ENCODE measurements at regions of chr3 and their contacts with region 1.

Region 1: GRCh38 chr3:190321789-190322603 is at the start of gene CLDN1:
- DNase-seq: peak; percentile 47 to 86 (median 76)
- ATAC-seq: peak; percentile 92
- H3K4me3 ChIP-seq: peak within 1 kb of the TSS; percentile 52
- H3K4me3 Mint-ChIP-seq: peak within 1 kb of the TSS; percentile 66 to 85 (median 80)
- H3K27ac ChIP-seq: no peak within 1 kb of the TSS
- H3K27ac Mint-ChIP-seq: peak within 1 kb of the TSS in 6 of 9 donors; percentile 6 to 38 (median 22)
- H3K4me1 ChIP-seq: peaks cover 0 to 4% of the 10 kb centered on the region in 2 donors
- H3K4me1 Mint-ChIP-seq: peaks cover 14 to 30% (median 21%) of the 10 kb centered on the region in 7 donors
- H3K27me3 ChIP-seq: no peaks in the 10 kb centered on the region
- H3K27me3 Mint-ChIP-seq: peaks cover 30 to 47% (median 38%) of the 10 kb centered on the region in 5 donors
- total RNA-seq, gene CLDN1: 0.08 to 0.32 TPM in 2 of 5 experiments, not detected in the others

Region 2: DNA sequence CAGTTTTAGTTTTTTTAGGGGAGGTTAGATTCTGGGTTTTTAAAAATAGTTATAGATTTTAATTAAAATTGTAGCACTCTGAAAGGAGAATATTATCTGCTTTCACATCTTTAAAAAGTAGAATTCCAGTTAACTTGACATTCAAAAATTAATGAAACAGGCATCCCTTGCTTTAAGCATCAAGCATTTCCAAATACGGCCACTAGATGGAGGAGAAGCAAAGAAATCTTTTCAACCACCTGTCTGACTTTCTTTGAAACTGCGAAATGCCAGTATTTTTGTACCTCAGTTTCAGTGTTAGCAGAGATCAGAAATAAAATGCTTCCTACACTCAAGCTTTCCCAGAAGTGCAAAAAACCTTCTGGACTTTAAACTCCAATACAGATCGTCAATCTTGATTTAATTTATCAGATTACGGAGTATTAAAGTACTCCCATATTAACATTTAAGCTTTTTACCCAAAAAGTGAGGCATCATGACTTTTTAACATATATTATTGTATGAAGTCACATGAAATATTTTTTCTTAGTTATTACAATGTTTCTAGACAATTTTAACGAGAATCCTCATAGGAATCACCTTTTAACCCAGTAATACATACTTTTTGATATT is 354.6 kb before region 1 on chr3:
- CTCF ChIA-PET with region 1: interaction called, 8 read pairs
- POLR2A ChIA-PET with region 1: no interaction called
- intact Hi-C with region 1: loop called (anchors 1 kb)
- DNase-seq: peak in 6 of 9 donors; percentile 13 to 47 (median 33)
- ATAC-seq: no peak
- H3K4me3 ChIP-seq: no peak overlapping the region
- H3K4me3 Mint-ChIP-seq: no peak overlapping the region
- H3K27ac ChIP-seq: no peak overlapping the region
- H3K27ac Mint-ChIP-seq: no peak overlapping the region
- H3K4me1 ChIP-seq: no peaks in the 10 kb centered on the region
- H3K4me1 Mint-ChIP-seq: peaks cover 0 to 4% (median 0%) of the 10 kb centered on the region in 7 donors
- H3K27me3 ChIP-seq: no peaks in the 10 kb centered on the region
- H3K27me3 Mint-ChIP-seq: peaks cover 0 to 9% (median 5%) of the 10 kb centered on the region in 5 donors

Region 3: GRCh38 chr3:190119461-190120268 is 202.3 kb before region 1 on chr3:
- CTCF ChIA-PET with region 1: no interaction called
- POLR2A ChIA-PET with region 1: no interaction called
- intact Hi-C with region 1: loop called in 1 of 2 experiments (anchors 5 kb)
- DNase-seq: no peak
- ATAC-seq: peak; percentile 24
- H3K4me3 ChIP-seq: no peak overlapping the region
- H3K4me3 Mint-ChIP-seq: peak overlapping the region; percentile 54 to 86 (median 70)
- H3K27ac ChIP-seq: no peak overlapping the region
- H3K27ac Mint-ChIP-seq: no peak overlapping the region
- H3K4me1 ChIP-seq: no peaks in the 10 kb centered on the region
- H3K4me1 Mint-ChIP-seq: peaks cover 3 to 12% (median 9%) of the 10 kb centered on the region in 7 donors
- H3K27me3 ChIP-seq: no peaks in the 10 kb centered on the region
- H3K27me3 Mint-ChIP-seq: peaks cover 48 to 78% (median 62%) of the 10 kb centered on the region in 5 donors

Region 4: DNA sequence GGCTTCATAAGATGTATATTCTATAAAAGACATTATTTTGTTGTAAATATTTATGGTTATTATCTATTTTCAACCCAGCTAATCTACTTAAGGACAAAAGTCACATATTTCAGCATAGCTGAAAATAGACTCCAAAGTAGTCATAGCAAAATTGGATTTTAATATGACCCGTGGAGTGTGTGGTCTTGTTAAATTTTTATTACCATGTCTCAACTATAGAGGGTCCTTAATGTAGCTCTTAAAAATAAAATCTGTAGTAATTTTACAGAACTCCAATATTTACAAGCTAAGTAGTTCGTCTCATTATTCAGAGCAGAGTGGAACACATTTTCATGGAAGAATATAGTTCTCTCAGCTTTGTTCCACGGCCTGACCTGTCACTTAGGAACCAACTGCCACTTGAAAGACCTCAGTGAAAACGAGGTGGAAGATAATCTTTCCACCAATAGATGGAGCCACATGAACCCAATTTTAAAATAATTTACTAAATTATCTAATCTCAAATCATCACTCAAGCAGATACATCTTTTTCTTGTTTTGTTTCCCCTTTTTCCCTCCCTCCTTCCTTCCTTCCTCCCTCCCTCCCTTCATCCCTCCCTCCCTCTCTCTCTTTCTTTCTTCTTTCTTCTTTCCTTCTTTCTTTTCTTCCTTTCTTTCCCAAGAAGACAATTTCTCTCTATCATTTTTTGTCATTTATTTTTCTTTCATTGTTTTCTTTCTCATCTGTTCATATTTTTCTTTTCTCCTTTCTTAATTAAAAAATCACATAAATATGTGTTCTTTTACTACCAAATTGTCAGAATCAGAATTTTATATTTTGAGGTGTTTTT is 96.9 kb before region 1 on chr3:
- CTCF ChIA-PET with region 1: interaction called, 21 read pairs
- POLR2A ChIA-PET with region 1: no interaction called
- intact Hi-C with region 1: loop called (anchors 1 to 2 kb)
- DNase-seq: peak in 6 of 9 donors; percentile 5 to 40 (median 26)
- ATAC-seq: no peak
- H3K4me3 ChIP-seq: no peak overlapping the region
- H3K4me3 Mint-ChIP-seq: no peak overlapping the region
- H3K27ac ChIP-seq: no peak overlapping the region
- H3K27ac Mint-ChIP-seq: no peak overlapping the region
- H3K4me1 ChIP-seq: no peaks in the 10 kb centered on the region
- H3K4me1 Mint-ChIP-seq: no peaks in the 10 kb centered on the region
- H3K27me3 ChIP-seq: no peaks in the 10 kb centered on the region
- H3K27me3 Mint-ChIP-seq: peaks cover 0 to 6% (median 5%) of the 10 kb centered on the region in 5 donors

Region 5: DNA sequence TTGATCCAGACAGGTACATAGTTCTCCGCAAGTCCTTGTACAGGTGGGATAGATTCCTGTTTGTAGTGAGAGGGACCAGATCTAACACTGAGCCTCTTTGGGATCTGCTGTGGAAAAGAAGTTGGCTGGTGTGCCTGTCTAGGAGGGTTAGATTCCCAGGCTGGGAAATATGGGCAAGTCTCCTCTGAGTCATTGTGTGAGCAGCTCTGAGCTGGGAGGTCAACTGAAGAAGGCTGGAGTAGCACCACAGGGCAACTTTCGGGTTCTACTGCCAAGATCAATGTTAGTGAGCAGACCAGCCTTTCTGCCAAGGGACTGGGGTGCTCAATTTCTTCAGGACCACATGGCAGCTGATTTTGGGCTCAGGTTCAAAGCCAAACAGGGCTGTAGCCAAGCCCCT is 33.2 kb before region 1 on chr3:
- CTCF ChIA-PET with region 1: no interaction called
- POLR2A ChIA-PET with region 1: no interaction called
- intact Hi-C with region 1: no loop called
- DNase-seq: no peak
- ATAC-seq: no peak
- H3K4me3 ChIP-seq: no peak overlapping the region
- H3K4me3 Mint-ChIP-seq: no peak overlapping the region
- H3K27ac ChIP-seq: no peak overlapping the region
- H3K27ac Mint-ChIP-seq: no peak overlapping the region
- H3K4me1 ChIP-seq: no peaks in the 10 kb centered on the region
- H3K4me1 Mint-ChIP-seq: no peaks in the 10 kb centered on the region
- H3K27me3 ChIP-seq: no peaks in the 10 kb centered on the region
- H3K27me3 Mint-ChIP-seq: peaks cover 0 to 4% (median 0%) of the 10 kb centered on the region in 5 donors

Region 6: GRCh38 chr3:190306513-190307165 is 15.4 kb before region 1 on chr3:
- CTCF ChIA-PET with region 1: no interaction called
- POLR2A ChIA-PET with region 1: no interaction called
- intact Hi-C with region 1: loop called in 1 of 2 experiments (anchors 2 kb)
- DNase-seq: peak in 7 of 9 donors; percentile 61 to 88 (median 78)
- ATAC-seq: peak; percentile 97
- H3K4me3 ChIP-seq: no peak overlapping the region
- H3K4me3 Mint-ChIP-seq: peak overlapping the region in 9 of 10 donors; percentile 8 to 53 (median 25)
- H3K27ac ChIP-seq: no peak overlapping the region
- H3K27ac Mint-ChIP-seq: peak overlapping the region in 8 of 9 donors; percentile 38 to 90 (median 80)
- H3K4me1 ChIP-seq: peaks cover 0 to 27% of the 10 kb centered on the region in 2 donors
- H3K4me1 Mint-ChIP-seq: peaks cover 13 to 39% (median 27%) of the 10 kb centered on the region in 7 donors
- H3K27me3 ChIP-seq: no peaks in the 10 kb centered on the region
- H3K27me3 Mint-ChIP-seq: peaks cover 0 to 6% (median 0%) of the 10 kb centered on the region in 5 donors

Measured in naive thymus-derived CD4-positive, alpha-beta T cell (primary cell).